ENCODE measurements at regions of chr1 and their contacts with region 1.

Region 1: DNA sequence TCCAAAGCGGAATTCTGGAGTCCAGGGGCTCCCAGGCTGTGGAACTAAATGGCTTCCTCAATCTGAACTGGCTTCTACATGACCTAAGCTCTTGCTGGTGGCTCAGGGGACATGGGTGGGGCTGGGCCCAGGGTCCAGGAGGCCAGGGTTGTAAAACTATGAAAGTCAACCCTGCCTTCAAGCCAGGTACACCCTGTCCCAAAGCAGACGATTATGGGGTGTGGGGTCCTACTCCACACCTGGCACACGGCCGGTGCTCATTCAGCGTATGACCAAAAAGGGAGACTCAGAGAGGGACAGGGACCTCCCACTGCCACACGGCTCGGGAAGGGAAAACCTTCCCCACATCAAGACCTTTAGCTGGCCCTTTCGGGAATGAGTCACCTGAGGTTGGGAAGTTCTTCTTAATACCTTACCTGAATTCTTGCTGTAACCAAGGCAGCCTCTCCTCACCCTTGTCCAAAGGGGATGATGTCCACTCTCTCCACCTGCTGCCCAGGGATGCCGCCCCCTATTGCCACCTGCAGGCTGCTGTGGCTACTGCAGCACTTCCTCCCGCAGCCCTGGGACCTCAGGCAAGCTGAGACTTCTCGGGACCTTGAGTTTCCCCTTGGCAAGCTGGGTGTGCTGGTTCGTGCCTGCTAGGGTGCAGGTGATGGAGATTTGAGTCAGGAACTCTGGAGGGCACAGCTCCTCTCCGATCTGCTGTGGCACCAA is 32.2 kb downstream of the RUNX3 start:
- DNase-seq: peak in 6 of 10 donors; percentile 14 to 57 (median 36)
- H3K4me3 ChIP-seq: no peak overlapping the region
- H3K27ac ChIP-seq: no peak overlapping the region
- H3K27me3 ChIP-seq: peaks cover 0 to 14% (median 0%) of the 10 kb centered on the region in 45 donors
- CTCF ChIP-seq: peak in 55 of 56 donors; percentile 15 to 72 (median 60)

Region 2: GRCh38 chr1:24847995-24848881 is 49.7 kb before region 1 on chr1:
- intact Hi-C with region 1: loop called in 1 of 2 experiments (anchors 2 kb)
- DNase-seq: peak; percentile 62 to 94 (median 92)
- H3K4me3 ChIP-seq: peak overlapping the region; percentile 44 to 80 (median 63)
- H3K27ac ChIP-seq: peak overlapping the region in 45 of 59 donors; percentile 1 to 86 (median 65)
- H3K27me3 ChIP-seq: no peaks in the 10 kb centered on the region
- CTCF ChIP-seq: peak; percentile 73 to 99 (median 96)

Region 3: DNA sequence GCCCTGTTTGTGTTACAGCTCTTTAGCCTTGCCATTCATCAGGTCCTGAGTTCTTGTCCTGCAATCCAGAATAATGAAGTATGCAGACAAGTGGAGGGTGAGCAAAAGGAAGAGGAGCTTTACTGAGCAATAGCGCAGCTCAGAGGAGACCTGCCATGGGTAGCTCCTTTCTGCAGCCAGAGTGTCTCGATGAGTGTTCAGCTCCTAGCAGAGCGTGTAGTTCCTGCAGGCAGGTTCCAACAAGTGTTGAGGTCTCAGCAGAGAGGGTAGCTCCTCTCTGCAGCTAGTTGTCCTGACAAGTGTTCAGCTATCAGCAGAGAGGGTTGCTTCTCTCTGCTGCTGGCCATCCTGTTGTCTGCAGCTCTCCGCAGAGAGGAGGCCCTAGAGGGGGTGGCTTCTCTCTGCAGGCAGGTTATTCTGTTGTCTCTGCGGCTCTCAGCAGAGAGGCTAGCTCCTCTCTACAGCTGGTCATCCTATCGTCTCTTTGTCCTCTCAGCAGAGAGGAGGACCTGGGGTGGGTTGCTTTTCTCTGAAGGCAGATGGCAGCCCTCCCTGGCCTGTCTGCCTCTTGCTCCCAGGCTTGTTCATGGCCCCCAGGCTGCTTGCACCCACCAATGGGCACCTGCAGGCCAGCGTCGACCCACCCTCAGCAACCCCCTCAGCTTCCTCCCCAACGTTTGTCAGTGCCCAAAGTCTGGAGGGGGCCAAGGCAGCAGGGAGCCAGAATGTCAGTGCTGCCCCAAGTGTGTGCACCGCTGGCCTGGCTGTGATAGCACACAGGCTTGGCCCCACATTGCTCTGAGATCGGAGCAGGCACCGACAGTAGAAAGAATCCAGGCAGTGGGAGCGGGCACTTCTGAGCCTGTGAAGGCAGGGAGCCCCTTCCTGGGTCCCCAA is 144.7 kb after region 1 on chr1:
- intact Hi-C with region 1: no loop called
- DNase-seq: no peak
- H3K4me3 ChIP-seq: no peak overlapping the region
- H3K27ac ChIP-seq: no peak overlapping the region
- H3K27me3 ChIP-seq: peaks cover 0 to 12% (median 0%) of the 10 kb centered on the region in 45 donors
- CTCF ChIP-seq: no peak